AG04450 (cell line): ENCODE measurements at regions of chr1 and their contacts with region 1.

Region 1: DNA sequence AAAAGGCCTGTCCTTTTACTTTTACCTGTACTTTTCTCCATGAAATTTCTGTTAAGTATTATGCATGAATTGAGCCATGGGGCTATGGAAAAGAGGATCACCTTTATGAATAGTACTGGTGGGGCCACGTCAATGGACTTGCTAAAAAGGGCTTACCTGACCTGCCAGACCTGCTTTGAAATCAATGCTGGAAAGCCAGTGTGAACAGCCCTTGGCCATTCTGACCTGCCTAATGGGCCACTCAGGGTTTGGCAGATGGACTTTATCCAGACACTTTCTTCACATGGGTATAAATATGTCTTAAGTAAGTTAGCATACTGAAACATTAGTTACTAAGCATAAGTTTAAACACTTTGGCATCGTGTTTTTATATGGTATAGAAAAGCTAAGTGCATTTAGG is 8.3 kb upstream of the GUK1 start:
- DNase-seq: no peak
- H3K4me3 ChIP-seq: no peak overlapping the region
- H3K27ac ChIP-seq: no peak overlapping the region
- H3K27me3 ChIP-seq: peaks cover 28% of the 10 kb centered on the region
- CTCF ChIP-seq: no peak

Region 2: GRCh38 chr1:228073857-228074545 is 57.8 kb before region 1 on chr1:
- CTCF ChIA-PET with region 1: no interaction called
- POLR2A ChIA-PET with region 1: no interaction called
- DNase-seq: no peak
- H3K4me3 ChIP-seq: no peak overlapping the region
- H3K27ac ChIP-seq: no peak overlapping the region
- H3K27me3 ChIP-seq: peaks cover 14% of the 10 kb centered on the region
- CTCF ChIP-seq: peak; percentile 4; the same call in 1 of the 2 replicates

Region 3: DNA sequence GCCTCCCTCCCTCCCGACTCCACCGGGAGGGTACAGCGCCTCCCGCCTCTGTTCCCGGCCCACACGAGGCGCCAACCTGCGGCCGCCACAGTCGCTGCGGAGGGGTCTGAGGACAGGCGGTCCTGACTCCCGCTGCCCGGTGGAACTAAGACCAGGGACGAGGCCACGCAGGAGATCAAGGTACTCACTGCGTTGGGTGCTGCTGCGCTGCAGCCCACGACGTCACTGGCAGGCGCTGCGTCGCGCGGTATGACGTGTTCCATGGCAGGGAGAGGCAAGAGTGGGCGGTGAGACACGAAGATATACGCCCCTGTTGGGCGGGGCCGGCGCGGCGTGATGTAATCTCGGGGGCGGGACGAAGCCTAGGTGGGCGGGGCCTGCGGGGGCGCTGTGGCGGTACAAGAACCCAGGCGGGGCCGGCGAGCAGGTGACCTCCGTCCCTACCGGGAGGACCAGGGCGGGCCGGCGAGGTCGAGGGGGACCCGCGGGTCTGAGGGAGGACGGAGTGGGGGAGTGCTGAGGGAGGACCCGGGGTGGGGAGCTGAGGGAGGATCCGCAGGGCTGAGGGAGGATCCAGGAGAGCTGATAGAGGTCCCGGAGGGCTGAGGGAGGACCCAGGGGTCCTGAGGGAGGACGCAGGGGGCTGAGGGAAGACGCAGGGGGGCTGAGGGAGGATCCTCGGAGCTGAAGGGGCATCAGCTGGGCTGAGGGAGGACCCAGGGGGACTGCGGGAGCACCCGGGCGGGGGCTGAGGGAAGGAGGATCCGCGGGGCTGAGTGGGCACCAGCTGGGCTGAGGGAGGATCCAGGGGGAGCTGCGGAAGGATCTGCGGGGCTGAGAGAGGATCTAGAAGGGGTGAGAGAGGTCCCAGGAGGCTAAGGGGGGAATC is 22.4 kb before region 1 on chr1 and contains the start of gene MRPL55:
- CTCF ChIA-PET with region 1: interaction called, 20 read pairs
- POLR2A ChIA-PET with region 1: no interaction called
- DNase-seq: peak; percentile 83
- H3K4me3 ChIP-seq: peak within 1 kb of the TSS; percentile 97
- H3K27ac ChIP-seq: peak within 1 kb of the TSS; percentile 57
- H3K27me3 ChIP-seq: no peaks in the 10 kb centered on the region
- CTCF ChIP-seq: peak; percentile 13; the same call in 1 of the 2 replicates
- polyA plus RNA-seq, gene MRPL55: 33.4 and 52.9 TPM in 2 replicates

Region 4: DNA sequence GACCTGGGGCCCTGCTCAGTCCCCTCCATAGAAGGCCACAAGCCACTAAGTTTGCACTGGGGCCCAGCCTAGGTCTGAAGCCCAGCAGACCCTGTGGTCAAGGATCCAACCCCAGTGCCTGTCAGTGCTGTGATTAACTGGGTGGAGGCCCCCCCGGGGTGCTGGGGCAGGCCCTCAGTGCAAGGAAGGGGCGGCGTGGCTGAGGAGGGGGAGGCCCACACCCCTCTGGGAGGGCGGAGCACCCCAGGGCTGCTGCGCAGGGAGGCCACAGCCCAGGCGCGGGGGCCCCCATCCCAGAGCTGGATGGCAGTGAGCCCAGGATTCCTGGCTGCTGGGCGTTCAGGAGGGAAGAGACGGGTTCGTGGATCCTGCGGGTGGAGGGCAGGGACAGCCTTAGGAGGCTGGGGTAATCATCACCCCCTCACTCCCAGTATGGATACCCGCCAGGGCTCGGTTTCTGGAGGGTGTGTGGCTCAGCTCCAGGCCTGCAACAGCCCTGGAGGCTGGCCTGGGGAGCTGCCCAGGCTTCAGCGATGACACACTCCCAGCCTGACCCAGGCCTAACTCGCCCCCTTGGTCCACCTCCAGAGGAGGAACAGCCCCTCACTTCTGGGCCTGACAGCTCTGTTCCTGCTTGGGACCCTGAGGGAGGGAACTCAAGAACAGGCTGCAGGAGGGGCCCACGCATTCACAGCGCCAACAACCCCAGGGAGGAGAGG is 18.9 kb after region 1 on chr1:
- CTCF ChIA-PET with region 1: interaction called, 12 read pairs
- POLR2A ChIA-PET with region 1: no interaction called
- DNase-seq: peak; percentile 65
- H3K4me3 ChIP-seq: peak overlapping the region; percentile 39
- H3K27ac ChIP-seq: peak overlapping the region; percentile 84
- H3K27me3 ChIP-seq: no peaks in the 10 kb centered on the region
- CTCF ChIP-seq: no peak

Region 5: DNA sequence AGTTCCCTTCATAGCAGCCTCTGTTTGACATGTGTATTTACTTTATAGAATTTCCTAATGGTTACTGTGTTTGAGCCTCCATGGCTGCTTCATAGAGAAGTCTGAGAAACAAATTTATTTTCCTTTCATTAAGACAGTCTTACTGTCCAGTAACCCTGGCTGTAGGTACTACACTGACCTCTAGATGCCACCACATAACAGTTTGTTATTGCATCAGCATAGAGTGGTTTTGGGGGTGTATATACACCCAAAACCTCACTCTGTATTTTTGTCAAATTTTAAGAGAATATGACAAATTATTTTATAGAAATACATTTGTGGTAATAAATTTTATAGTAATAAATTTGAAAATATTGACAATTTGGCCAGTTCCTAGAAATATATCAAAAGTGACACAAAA is 133.4 kb after region 1 on chr1:
- CTCF ChIA-PET with region 1: no interaction called
- POLR2A ChIA-PET with region 1: no interaction called
- DNase-seq: no peak
- H3K4me3 ChIP-seq: no peak overlapping the region
- H3K27ac ChIP-seq: no peak overlapping the region
- H3K27me3 ChIP-seq: no peaks in the 10 kb centered on the region
- CTCF ChIP-seq: no peak

Region 6: DNA sequence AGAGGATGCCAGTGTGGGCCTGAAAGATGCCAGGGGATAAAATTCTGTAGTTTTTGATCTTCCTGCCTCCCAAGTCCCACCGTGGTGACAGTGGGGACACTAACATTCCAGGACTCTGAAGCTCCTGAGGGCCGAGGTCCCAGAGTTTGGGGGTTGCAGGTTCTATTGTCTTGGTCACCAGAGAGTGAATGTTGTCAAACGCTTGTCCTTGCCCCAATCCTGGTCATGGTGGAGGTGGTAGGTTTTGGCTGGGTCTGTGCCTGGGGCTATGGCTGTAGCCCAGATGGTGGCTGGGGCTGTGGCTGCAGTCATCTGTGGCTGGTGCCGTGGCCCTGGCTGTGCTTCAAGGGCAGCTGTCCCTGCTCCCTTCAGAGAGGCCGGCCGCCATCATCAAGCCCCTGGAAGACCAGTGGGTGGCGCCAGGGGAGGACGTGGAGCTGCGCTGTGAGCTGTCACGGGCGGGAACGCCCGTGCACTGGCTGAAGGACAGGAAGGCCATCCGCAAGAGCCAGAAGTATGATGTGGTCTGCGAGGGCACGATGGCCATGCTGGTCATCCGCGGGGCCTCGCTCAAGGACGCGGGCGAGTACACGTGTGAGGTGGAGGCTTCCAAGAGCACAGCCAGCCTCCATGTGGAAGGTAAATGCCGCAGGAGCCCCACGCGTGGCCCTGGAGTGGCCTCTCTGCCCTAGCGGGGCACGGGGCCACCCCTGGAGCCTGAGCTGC is 151.0 kb after region 1 on chr1:
- CTCF ChIA-PET with region 1: interaction called, 13 read pairs
- POLR2A ChIA-PET with region 1: no interaction called
- DNase-seq: no peak
- H3K4me3 ChIP-seq: no peak overlapping the region
- H3K27ac ChIP-seq: no peak overlapping the region
- H3K27me3 ChIP-seq: no peaks in the 10 kb centered on the region
- CTCF ChIP-seq: no peak

Region 7: GRCh38 chr1:228457396-228458176 is 325.8 kb after region 1 on chr1:
- CTCF ChIA-PET with region 1: interaction called, 4 read pairs
- POLR2A ChIA-PET with region 1: interaction called, 10 read pairs
- DNase-seq: peak; percentile 97
- H3K4me3 ChIP-seq: peak overlapping the region; percentile 83
- H3K27ac ChIP-seq: peak overlapping the region; percentile 74
- H3K27me3 ChIP-seq: no peaks in the 10 kb centered on the region
- CTCF ChIP-seq: peak; percentile 31; the same call in 1 of the 2 replicates